ENCODE measurements at regions of chr2 and their contacts with region 1.

Region 1: GRCh38 chr2:17879101-17879912 is 840 bp downstream of the KCNS3 start:
- DNase-seq: peak; percentile 87 to 88
- H3K4me3 ChIP-seq: peak overlapping the region; percentile 99
- H3K27ac ChIP-seq: peak overlapping the region; percentile 25; the same call in 1 of the 2 replicates
- H3K4me1 ChIP-seq: peaks cover 10% of the 10 kb centered on the region
- H3K27me3 ChIP-seq: peaks cover 21% of the 10 kb centered on the region; the same call in 1 of the 2 replicates
- CTCF ChIP-seq: peak; percentile 52; the same call in 1 of the 2 replicates

Region 2: DNA sequence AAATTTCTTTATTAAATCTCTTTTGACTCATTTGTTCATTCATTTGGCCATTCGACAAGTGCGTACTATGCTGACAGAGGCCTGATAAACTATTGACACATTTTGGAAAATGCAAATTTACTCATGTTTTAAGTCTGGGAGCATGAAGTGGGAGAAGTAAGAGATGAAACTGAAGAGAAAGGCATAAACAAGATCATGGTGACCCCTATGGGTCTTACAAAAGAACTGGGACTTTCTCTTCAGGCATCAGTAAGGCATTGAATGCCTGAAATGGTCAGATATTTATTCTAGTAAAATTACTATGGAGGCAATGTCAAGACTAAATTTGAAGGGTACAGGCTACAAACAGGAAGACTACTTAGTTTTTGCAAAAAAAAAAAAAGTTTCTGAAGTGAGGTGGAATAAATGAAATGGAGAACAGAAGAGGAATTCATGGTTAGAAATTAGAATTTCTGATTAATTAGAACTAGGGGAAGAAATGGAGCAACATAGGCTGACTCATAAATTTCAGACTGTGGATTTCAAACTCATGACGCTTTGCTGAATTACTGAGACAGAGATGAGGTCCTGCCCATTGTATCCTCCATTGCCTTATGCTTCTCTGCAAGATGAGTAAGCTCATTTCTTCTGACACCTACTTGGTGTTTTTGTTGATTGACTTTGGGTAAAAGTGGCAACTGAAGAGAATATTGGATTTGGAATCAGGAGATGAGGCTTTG is 306.1 kb before region 1 on chr2:
- CTCF ChIA-PET with region 1: no interaction called
- POLR2A ChIA-PET with region 1: no interaction called
- intact Hi-C with region 1: no loop called
- DNase-seq: no peak
- H3K4me3 ChIP-seq: no peak overlapping the region
- H3K27ac ChIP-seq: no peak overlapping the region
- H3K4me1 ChIP-seq: peaks cover 14% of the 10 kb centered on the region
- H3K27me3 ChIP-seq: no peaks in the 10 kb centered on the region
- CTCF ChIP-seq: no peak

Region 3: DNA sequence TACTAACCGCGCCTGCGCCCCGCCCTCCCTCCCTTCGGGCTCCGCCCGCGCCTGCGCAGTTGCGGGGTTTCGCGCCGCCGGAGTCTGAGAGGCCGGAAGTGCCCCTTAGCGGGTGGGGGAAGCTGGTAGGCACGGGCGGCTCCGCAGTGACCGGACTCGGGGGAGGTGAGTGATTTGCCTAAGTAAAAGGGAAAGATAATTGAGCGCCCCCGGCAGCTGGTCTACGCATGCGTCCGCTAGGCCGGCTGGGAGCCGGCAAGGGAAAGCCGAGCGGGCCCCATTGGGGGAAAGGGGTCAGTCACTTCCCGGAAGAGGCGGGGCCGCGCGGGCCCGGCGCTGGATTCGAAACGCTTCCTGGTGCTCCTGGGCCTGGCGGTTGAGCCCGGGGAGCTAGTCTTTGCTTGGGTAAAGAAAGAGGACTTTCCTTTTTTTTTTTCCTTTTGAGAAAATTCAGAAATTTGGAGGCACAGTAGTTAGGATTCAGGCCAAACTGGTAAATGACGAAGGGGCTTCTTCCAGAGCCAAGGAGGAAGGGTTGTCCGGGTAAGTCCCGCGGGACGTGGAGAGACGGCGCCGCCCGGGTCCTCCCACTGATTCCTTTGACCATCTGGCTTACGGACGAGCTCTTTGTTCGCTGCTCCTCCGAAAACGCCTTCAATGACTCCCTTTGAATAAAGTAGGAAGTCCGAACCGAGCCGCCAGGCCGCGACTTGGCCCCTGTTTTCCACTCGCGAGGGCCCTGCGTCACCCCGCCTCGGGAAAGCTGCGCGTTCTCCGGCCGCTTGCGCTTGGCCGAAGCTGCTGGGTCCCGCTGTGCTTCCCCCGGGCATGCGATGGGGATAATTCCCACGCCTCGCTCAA is 125.3 kb before region 1 on chr2 and contains the starts of genes GEN1 and SMC6:
- CTCF ChIA-PET with region 1: no interaction called
- POLR2A ChIA-PET with region 1: interaction called, 12 read pairs
- intact Hi-C with region 1: loop called (anchors 1 kb)
- DNase-seq: peak; percentile 82 to 87
- H3K4me3 ChIP-seq: peak within 1 kb of the TSS; percentile 96
- H3K27ac ChIP-seq: peak within 1 kb of the TSS; percentile 93
- H3K4me1 ChIP-seq: peaks cover 28% of the 10 kb centered on the region
- H3K27me3 ChIP-seq: no peaks in the 10 kb centered on the region
- CTCF ChIP-seq: no peak
- total RNA-seq, gene GEN1: 14.4 and 28.3 TPM in 2 replicates
- total RNA-seq, gene SMC6: 15.5 and 19.2 TPM in 2 replicates

Region 4: GRCh38 chr2:17892770-17893534 is 13.6 kb after region 1 on chr2:
- CTCF ChIA-PET with region 1: interaction called, 8 read pairs
- POLR2A ChIA-PET with region 1: interaction called, 18 read pairs
- intact Hi-C with region 1: loop called (anchors 1 kb)
- DNase-seq: peak; percentile 77 to 84
- H3K4me3 ChIP-seq: peak overlapping the region; percentile 1; the same call in 1 of the 2 replicates
- H3K27ac ChIP-seq: peak overlapping the region; percentile 66
- H3K4me1 ChIP-seq: peaks cover 25% of the 10 kb centered on the region
- H3K27me3 ChIP-seq: no peaks in the 10 kb centered on the region
- CTCF ChIP-seq: no peak

Region 5: DNA sequence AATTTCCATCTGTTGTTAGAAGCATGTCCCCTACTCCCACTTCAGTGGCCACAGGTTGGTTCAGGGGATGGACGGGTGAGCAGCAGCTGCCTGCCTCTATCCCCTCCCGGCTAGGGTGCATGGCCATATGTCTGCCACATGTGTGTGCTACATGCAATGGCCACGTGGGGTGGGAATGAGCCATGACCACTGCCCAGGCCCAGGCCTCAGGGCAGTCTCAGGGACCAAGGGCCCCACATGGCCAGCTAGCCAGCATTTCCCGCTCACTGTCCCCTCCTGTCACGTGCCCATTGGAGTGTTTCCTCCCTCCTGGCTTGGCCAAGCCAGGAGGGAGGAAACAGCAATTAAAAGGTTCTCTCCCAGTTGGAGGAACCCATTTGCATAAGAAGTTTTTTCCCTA is 116.3 kb after region 1 on chr2:
- CTCF ChIA-PET with region 1: no interaction called
- POLR2A ChIA-PET with region 1: no interaction called
- intact Hi-C with region 1: no loop called
- DNase-seq: no peak
- H3K4me3 ChIP-seq: no peak overlapping the region
- H3K27ac ChIP-seq: no peak overlapping the region
- H3K4me1 ChIP-seq: no peaks in the 10 kb centered on the region
- H3K27me3 ChIP-seq: no peaks in the 10 kb centered on the region
- CTCF ChIP-seq: no peak

Region 6: DNA sequence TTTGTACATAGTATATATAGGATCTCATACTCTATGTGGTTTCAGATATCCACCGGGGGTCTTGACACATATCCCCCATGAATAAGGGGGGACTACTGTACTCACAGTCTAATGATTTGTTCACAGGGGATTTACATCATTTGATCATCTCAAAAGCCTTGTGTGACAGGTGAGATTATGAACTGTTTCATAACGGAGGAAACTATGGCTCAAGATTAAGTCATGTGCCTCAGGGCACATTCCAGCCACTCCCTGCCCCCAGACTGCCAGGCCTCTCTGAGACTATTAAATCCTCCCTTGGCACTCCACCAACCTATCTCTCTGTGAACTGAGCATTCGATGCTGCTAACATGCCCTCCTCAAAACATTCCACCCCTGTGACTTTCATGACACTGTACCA is 168.5 kb after region 1 on chr2:
- CTCF ChIA-PET with region 1: no interaction called
- POLR2A ChIA-PET with region 1: no interaction called
- intact Hi-C with region 1: loop called (anchors 1 kb)
- DNase-seq: peak; percentile 79 to 91
- H3K4me3 ChIP-seq: no peak overlapping the region; the same call in 1 of the 2 replicates
- H3K27ac ChIP-seq: peak overlapping the region; percentile 79
- H3K4me1 ChIP-seq: peaks cover 32% of the 10 kb centered on the region
- H3K27me3 ChIP-seq: no peaks in the 10 kb centered on the region
- CTCF ChIP-seq: no peak